ENCODE measurements at regions of chr7 and their contacts with region 1.

Region 1: DNA sequence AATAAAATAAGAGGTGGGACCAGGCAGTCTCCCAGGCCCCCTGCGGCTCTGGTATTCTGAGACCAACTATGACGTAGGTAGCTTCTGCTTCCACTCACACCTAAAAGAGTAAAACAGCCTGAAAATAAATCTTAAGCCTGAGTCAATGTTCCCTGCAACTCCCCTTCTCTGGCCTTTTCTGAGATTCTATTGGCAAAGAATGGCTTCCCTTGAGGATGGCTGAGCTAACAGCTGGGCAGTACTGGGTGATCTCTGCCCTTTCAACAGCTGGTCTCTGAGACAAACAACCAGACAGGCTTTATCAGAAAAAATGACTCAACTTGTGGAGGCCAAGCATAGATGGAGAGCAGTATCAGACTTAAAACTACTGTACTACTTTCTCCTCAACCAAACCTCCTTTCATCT is 58.7 kb downstream of the CREB3L2 start:
- DNase-seq: peak in 1 of 2 donors; percentile 69
- ATAC-seq: peak; percentile 82 to 92 (median 90)
- H3K4me3 ChIP-seq: no peak overlapping the region
- H3K27ac ChIP-seq: peak overlapping the region in 9 of 10 donors; percentile 2 to 82 (median 69)
- H3K4me1 ChIP-seq: peaks cover 0 to 70% (median 41%) of the 10 kb centered on the region in 9 donors
- H3K27me3 ChIP-seq: no peaks in the 10 kb centered on the region
- CTCF ChIP-seq: no peak

Region 2: GRCh38 chr7:137975221-137975620 is 32.1 kb after region 1 on chr7:
- intact Hi-C with region 1: loop called in 1 of 10 experiments (anchors 5 kb)
- DNase-seq: peak; percentile 44 to 58
- ATAC-seq: peak; percentile 41 to 76 (median 56)
- H3K4me3 ChIP-seq: no peak overlapping the region
- H3K27ac ChIP-seq: peak overlapping the region; percentile 29 to 83 (median 69)
- H3K4me1 ChIP-seq: peaks cover 9 to 91% (median 56%) of the 10 kb centered on the region in 9 donors
- H3K27me3 ChIP-seq: no peaks in the 10 kb centered on the region
- CTCF ChIP-seq: no peak

Region 3: DNA sequence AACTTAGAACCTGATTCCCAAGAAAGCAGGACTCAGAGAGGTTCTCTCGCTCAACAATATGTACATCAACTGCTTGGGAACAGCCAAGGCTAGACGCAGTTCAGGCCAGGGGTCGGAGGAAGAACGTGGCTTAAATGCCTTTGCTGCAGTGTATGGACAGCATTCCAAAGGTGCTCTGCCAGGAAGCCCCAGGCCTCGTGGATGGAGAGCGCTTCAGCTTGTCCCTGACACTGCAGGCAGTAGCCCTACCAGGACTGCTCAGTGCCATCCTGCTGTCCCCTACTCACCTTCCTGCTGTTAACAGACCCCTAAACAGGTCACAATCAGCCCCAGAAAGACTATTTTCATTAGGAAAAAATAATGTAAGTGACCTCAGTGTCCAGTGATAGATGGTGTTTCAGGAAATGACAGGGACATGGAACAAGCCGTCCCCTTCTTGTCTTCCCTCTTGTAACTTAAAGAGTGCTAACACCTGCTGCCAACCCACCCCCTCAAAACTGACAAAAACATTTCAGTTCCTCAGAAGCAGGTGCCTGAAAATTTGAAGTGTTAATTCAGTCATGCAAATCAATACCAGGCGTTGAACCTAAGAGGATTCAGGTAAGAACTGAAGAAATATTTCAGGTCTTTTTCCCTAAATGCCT is 42.2 kb after region 1 on chr7:
- intact Hi-C with region 1: loop called in 2 of 10 experiments (anchors 5 kb)
- DNase-seq: no peak
- ATAC-seq: no peak
- H3K4me3 ChIP-seq: no peak overlapping the region
- H3K27ac ChIP-seq: peak overlapping the region in 5 of 10 donors; percentile 9 to 90 (median 62)
- H3K4me1 ChIP-seq: peaks cover 24 to 100% (median 82%) of the 10 kb centered on the region in 9 donors
- H3K27me3 ChIP-seq: no peaks in the 10 kb centered on the region
- CTCF ChIP-seq: no peak

Region 4: GRCh38 chr7:137992550-137993394 is 49.6 kb after region 1 on chr7:
- intact Hi-C with region 1: loop called in 2 of 10 experiments (anchors 5 kb)
- DNase-seq: peak in 1 of 2 donors; percentile 69
- ATAC-seq: peak; percentile 64 to 78 (median 69)
- H3K4me3 ChIP-seq: no peak overlapping the region
- H3K27ac ChIP-seq: peak overlapping the region; percentile 41 to 90 (median 68)
- H3K4me1 ChIP-seq: peaks cover 13 to 99% (median 94%) of the 10 kb centered on the region in 9 donors
- H3K27me3 ChIP-seq: no peaks in the 10 kb centered on the region
- CTCF ChIP-seq: no peak

Region 5: GRCh38 chr7:138023618-138024342 is 80.6 kb after region 1 on chr7:
- intact Hi-C with region 1: no loop called
- DNase-seq: no peak
- ATAC-seq: no peak
- H3K4me3 ChIP-seq: no peak overlapping the region
- H3K27ac ChIP-seq: no peak overlapping the region
- H3K4me1 ChIP-seq: no peaks in the 10 kb centered on the region
- H3K27me3 ChIP-seq: peaks cover 0 to 7% (median 0%) of the 10 kb centered on the region in 7 donors
- CTCF ChIP-seq: no peak